AG04450 (cell line): ENCODE measurements at regions of chr2 and their contacts with region 1.

Region 1: DNA sequence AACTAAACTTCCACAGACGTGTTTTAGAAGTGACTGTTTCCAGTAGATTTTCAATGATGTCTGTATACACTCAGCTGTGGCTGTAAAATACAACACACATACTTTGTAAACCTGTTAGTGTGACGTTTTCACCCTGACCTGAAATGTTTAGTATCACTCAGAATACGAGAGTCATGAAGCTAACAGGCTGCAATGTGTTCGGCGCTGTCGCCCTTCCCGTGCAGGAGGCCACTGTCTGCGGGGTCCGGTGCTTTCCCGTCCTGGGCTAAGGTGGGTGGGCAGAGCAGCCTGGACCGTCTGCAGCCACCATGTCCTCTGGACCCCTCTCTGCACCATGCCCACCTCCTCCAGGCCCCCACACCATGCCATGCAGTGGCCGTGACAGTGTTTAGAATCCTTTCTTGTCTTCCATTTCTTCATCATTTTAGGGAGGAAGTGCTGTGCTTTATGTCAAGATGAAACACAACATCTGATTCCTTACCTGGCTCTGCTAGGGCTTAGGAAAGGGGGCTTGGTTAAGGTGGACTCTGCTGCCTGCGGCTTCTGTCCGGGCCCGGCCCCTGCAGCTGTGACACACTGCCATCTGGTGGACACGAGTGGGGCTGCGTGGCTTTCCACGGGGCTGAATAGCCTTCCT is 53.8 kb upstream of the RBM44 start:
- DNase-seq: no peak
- H3K4me3 ChIP-seq: no peak overlapping the region
- H3K27ac ChIP-seq: peak overlapping the region; percentile 12
- H3K27me3 ChIP-seq: no peaks in the 10 kb centered on the region
- CTCF ChIP-seq: peak; percentile 99

Region 2: DNA sequence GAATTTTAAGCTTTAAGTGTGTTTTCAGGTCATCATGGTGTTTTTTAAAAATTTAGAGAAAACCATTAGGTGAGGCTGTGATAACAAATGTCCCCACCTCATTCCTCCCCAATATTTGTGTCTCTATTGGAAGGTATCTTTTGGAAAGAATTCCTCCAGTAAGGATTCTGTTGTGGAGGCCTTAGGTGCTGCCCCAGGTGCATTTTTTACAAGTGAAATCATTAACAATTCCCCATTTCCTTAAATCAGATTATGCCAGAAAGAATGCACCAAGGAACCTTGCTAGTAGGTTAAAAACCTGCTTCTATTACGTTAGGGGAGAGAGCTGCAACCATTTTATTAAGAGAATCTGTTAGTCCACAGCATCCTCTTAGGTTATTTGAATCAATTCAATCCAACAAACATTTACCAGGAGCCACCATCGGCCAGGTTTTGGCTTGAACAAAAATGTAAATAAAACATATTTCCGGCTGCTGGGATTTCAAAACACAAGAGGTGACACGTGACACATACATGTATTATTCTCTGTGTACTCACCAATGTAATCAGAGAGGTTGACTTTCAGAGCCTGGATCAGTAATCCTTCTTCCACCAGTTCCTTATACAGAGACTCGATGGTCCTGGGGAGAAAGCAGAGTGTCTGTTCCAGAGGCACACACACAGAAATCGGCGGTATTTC is 1368.0 kb before region 1 on chr2:
- CTCF ChIA-PET with region 1: no interaction called
- POLR2A ChIA-PET with region 1: no interaction called
- DNase-seq: no peak
- H3K4me3 ChIP-seq: no peak overlapping the region
- H3K27ac ChIP-seq: no peak overlapping the region
- H3K27me3 ChIP-seq: no peaks in the 10 kb centered on the region
- CTCF ChIP-seq: no peak

Region 3: DNA sequence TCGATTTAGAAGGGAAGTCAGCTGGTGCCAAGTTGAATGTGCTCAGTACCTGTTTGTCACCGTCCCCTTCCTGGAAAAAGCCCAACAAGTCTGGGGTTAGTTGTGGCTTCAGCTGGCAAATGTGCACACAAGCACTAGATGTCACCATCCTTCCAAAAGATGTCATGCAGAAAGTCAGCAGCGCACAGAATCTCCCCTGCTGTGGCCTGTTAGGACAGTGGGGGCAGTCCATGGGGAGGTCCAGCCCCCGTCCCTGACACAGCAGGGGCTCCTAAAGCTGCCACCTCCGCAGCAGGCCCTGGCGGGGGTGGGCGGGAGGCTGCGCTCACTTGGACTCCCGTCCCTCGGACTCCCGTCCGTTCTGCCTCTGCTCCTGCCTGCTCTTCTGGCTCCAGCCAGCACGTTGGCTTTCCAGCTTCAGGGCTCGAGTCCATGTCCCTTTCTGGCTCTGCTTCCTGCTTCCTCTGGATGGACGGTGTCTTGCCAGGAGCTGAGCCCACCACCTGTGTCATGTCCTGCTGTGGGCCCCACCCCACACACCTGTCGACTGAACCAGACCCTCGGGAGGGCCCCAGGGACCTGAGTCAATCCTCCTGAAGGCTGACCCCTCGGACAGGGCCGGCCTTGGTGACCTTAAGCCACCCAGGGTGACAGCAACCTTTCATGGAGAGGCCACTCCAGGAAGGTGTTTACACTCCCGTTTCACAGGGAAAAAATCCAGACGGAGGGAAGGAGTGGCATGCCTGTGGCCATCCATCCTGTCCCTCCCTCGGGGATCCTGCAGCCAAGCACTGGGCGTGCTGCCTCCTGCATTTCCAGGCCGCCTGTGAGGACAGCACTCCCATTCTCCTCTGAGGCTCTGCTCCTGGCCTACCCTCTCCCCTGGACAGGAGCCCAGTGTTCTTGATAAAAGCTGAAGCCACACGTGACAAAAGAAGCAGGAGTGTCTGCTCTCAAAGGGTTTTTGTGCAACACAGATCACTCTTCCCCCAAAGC is 162.7 kb before region 1 on chr2:
- CTCF ChIA-PET with region 1: interaction called, 79 read pairs
- POLR2A ChIA-PET with region 1: no interaction called
- DNase-seq: no peak
- H3K4me3 ChIP-seq: peak overlapping the region; percentile 13; the same call in 1 of the 2 replicates
- H3K27ac ChIP-seq: no peak overlapping the region
- H3K27me3 ChIP-seq: peaks cover 7% of the 10 kb centered on the region
- CTCF ChIP-seq: peak; percentile 50

Region 4: DNA sequence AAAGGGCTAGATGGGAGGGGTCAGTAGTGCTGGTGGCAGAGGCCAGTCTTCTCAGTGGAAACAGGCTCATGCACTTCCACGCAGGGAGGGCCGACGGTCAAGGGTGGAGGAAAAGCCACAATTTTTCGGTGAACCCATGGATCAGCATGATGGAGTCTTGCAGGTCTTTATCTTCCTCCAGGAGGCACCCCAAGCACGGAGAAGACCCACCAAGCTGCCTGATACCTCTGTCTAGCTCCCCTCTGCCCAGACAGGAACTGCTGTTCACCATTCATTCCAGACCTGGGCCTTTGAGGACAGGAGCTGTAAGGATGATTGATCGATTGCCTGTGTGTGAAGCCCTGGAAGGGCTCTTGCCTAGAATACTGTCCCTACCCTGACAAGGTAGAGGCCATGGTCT is 120.2 kb before region 1 on chr2:
- CTCF ChIA-PET with region 1: interaction called, 12 read pairs
- POLR2A ChIA-PET with region 1: no interaction called
- DNase-seq: no peak
- H3K4me3 ChIP-seq: no peak overlapping the region
- H3K27ac ChIP-seq: no peak overlapping the region
- H3K27me3 ChIP-seq: no peaks in the 10 kb centered on the region
- CTCF ChIP-seq: no peak

Region 5: GRCh38 chr2:237685408-237685807 is 59.3 kb before region 1 on chr2:
- CTCF ChIA-PET with region 1: interaction called, 18 read pairs
- POLR2A ChIA-PET with region 1: no interaction called
- DNase-seq: no peak
- H3K4me3 ChIP-seq: no peak overlapping the region
- H3K27ac ChIP-seq: no peak overlapping the region
- H3K27me3 ChIP-seq: no peaks in the 10 kb centered on the region
- CTCF ChIP-seq: peak; percentile 44

Region 6: GRCh38 chr2:237723602-237724001 is 21.1 kb before region 1 on chr2:
- CTCF ChIA-PET with region 1: interaction called, 70 read pairs
- POLR2A ChIA-PET with region 1: interaction called, 10 read pairs
- DNase-seq: no peak
- H3K4me3 ChIP-seq: no peak overlapping the region
- H3K27ac ChIP-seq: no peak overlapping the region
- H3K27me3 ChIP-seq: no peaks in the 10 kb centered on the region
- CTCF ChIP-seq: no peak

Region 7: GRCh38 chr2:237758185-237758584 is 13.5 kb after region 1 on chr2:
- CTCF ChIA-PET with region 1: interaction called, 35 read pairs
- POLR2A ChIA-PET with region 1: no interaction called
- DNase-seq: no peak
- H3K4me3 ChIP-seq: no peak overlapping the region
- H3K27ac ChIP-seq: no peak overlapping the region
- H3K27me3 ChIP-seq: no peaks in the 10 kb centered on the region
- CTCF ChIP-seq: no peak

Region 8: DNA sequence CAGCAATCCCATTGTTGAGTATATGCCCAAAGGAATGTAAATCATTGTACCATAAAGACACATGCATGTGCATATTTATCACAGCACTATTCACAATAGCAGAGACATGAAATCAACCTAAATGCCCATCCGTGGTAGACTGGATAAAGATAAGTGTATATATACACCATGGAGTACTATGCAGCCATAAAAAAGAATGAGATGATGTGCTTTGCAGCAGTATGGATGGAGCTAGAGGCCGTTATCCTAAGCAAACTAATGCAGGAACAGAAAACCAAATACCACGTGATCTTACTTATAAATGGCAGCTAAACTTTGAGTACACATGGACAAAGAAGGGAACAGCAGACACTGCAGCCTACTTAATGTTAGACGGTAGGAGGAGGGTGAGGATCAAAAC is 96.3 kb after region 1 on chr2:
- CTCF ChIA-PET with region 1: no interaction called
- POLR2A ChIA-PET with region 1: no interaction called
- DNase-seq: no peak
- H3K4me3 ChIP-seq: no peak overlapping the region
- H3K27ac ChIP-seq: no peak overlapping the region
- H3K27me3 ChIP-seq: peaks cover 5% of the 10 kb centered on the region
- CTCF ChIP-seq: no peak

Region 9: GRCh38 chr2:238239872-238240751 is 495.4 kb after region 1 on chr2 and contains the start of gene HES6:
- CTCF ChIA-PET with region 1: no interaction called
- POLR2A ChIA-PET with region 1: no interaction called
- DNase-seq: peak; percentile 39
- H3K4me3 ChIP-seq: peak within 1 kb of the TSS; percentile 64
- H3K27ac ChIP-seq: no peak within 1 kb of the TSS
- H3K27me3 ChIP-seq: peaks cover 29% of the 10 kb centered on the region
- CTCF ChIP-seq: no peak
- polyA plus RNA-seq, gene HES6: 2.9 and 3.9 TPM in 2 replicates